ENCODE measurements at regions of chr16 and their contacts with region 1.

Region 1: GRCh38 chr16:27273670-27274423 is 5.3 kb upstream of the NSMCE1 start:
- DNase-seq: peak in 7 of 9 donors; percentile 44 to 75 (median 56)
- ATAC-seq: peak; percentile 79
- H3K4me3 ChIP-seq: peak overlapping the region; percentile 15
- H3K4me3 Mint-ChIP-seq: peak overlapping the region; percentile 49 to 88 (median 74)
- H3K27ac ChIP-seq: peak overlapping the region; percentile 63
- H3K27ac Mint-ChIP-seq: peak overlapping the region; percentile 48 to 95 (median 88)
- H3K4me1 ChIP-seq: peaks cover 9 to 30% of the 10 kb centered on the region in 2 donors
- H3K4me1 Mint-ChIP-seq: peaks cover 25 to 77% (median 65%) of the 10 kb centered on the region in 7 donors
- H3K27me3 ChIP-seq: no peaks in the 10 kb centered on the region
- H3K27me3 Mint-ChIP-seq: peaks cover 0 to 4% (median 0%) of the 10 kb centered on the region in 5 donors

Region 2: GRCh38 chr16:27286451-27286850 is 12.6 kb after region 1 on chr16:
- CTCF ChIA-PET with region 1: no interaction called
- POLR2A ChIA-PET with region 1: interaction called, 8 read pairs
- intact Hi-C with region 1: loop called (anchors 1 to 2 kb)
- DNase-seq: no peak
- ATAC-seq: peak; percentile 61
- H3K4me3 ChIP-seq: no peak overlapping the region
- H3K4me3 Mint-ChIP-seq: peak overlapping the region in 1 of 10 donors; percentile 27
- H3K27ac ChIP-seq: no peak overlapping the region
- H3K27ac Mint-ChIP-seq: peak overlapping the region in 8 of 9 donors; percentile 16 to 93 (median 42)
- H3K4me1 ChIP-seq: peaks cover 0 to 50% of the 10 kb centered on the region in 2 donors
- H3K4me1 Mint-ChIP-seq: peaks cover 41 to 90% (median 80%) of the 10 kb centered on the region in 7 donors
- H3K27me3 ChIP-seq: no peaks in the 10 kb centered on the region
- H3K27me3 Mint-ChIP-seq: no peaks in the 10 kb centered on the region